ENCODE measurements at regions of chr9 and their contacts with region 1.

Region 1: DNA sequence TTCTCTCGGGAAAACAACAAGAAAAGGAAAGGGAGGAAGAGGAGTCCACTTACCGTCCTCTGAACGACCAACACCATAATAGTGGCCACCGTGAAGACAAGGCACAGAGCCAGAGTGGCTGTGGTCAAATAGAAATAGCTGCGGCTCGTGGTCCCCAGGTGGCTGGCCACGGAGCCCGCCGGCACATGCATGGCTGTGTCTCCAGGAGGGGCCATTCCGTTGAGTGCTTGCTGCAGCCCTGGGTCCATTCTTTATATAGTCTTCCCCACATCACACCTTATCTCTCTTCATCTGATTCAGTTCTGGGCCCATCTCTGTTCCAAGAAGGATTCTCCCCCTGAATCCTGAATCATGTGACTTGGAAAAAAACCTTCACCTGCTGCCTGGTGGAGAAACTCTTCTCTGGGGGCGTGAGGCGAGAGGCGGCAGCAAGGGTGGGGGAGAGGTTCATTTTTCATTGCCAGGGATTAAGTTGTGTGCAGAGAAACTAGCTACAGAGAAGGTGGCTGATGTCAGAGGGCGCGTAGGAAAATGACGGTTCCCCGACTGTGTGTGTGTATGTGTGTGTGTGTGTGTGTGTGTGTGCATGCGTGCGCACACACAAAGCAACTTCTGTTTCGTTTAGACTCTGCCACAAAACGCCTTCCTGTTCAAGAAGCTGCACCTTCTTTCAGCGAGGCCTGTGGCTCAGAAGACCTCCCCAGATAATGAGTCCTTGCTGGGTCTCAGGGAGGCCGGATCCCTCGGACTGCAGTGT is at the start of gene TNFSF8:
- DNase-seq: peak; percentile 83
- H3K4me3 Mint-ChIP-seq: peak within 1 kb of the TSS; percentile 94
- H3K27ac Mint-ChIP-seq: peak within 1 kb of the TSS; percentile 96
- H3K4me1 Mint-ChIP-seq: peaks cover 53% of the 10 kb centered on the region
- H3K27me3 Mint-ChIP-seq: peaks cover 2% of the 10 kb centered on the region
- total RNA-seq, gene TNFSF8: 34.6 to 34.8 TPM

Region 2: DNA sequence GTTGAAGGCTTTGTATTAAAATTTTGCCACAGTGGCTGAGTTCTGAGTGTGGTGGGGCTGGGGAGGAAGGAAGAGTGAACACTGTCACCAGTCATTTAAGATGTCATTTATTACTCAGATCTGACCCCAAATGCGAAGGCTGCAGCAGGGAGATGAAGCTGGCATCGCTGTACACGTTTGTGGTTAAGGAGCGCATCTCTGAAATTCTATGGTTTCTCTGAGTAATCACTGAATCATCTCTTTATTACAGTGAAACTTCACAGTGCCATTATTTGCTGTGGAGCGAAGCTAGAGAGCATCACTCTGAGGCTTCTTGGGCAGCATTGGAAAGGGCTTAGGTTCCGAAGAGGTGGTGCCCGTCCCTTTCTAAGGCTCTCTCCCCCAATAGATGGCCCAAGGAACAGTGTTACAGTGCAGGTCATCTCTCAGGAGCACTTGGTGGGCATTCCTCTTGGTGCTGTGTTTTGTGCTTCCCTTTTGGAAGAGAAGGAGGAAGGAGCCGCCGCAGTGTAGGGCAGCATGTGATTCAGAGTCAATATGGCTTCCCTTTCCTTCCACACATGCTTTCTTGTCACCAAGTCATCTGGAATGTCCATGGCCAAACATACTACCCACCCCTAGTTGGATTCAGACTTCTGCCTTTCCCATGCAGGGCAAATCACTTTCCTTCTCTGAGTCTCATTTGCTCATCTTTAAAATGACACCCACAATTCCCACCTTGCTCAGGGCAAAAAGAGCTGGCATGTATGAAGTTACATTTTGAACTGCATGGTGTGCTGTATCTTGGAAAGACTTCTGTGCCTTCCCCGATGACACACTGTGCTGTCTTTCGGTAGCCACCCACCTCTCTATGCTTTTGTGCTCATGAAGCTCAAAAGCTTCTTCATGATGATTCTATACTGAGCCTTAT is 238.9 kb before region 1 on chr9:
- CTCF ChIA-PET with region 1: interaction called, 6 read pairs
- POLR2A ChIA-PET with region 1: interaction called, 106 read pairs
- DNase-seq: peak; percentile 87
- H3K4me3 Mint-ChIP-seq: peak overlapping the region; percentile 26
- H3K27ac Mint-ChIP-seq: peak overlapping the region; percentile 93
- H3K4me1 Mint-ChIP-seq: peaks cover 95% of the 10 kb centered on the region
- H3K27me3 Mint-ChIP-seq: peaks cover 33% of the 10 kb centered on the region

Region 3: GRCh38 chr9:114738581-114739316 is 191.5 kb before region 1 on chr9:
- CTCF ChIA-PET with region 1: interaction called, 11 read pairs
- POLR2A ChIA-PET with region 1: interaction called, 28 read pairs
- DNase-seq: peak; percentile 80
- H3K4me3 Mint-ChIP-seq: no peak overlapping the region
- H3K27ac Mint-ChIP-seq: peak overlapping the region; percentile 64
- H3K4me1 Mint-ChIP-seq: peaks cover 59% of the 10 kb centered on the region
- H3K27me3 Mint-ChIP-seq: peaks cover 11% of the 10 kb centered on the region

Region 4: GRCh38 chr9:114880291-114880751 is 49.9 kb before region 1 on chr9:
- CTCF ChIA-PET with region 1: no interaction called
- POLR2A ChIA-PET with region 1: no interaction called
- DNase-seq: no peak
- H3K4me3 Mint-ChIP-seq: no peak overlapping the region
- H3K27ac Mint-ChIP-seq: no peak overlapping the region
- H3K4me1 Mint-ChIP-seq: peaks cover 2% of the 10 kb centered on the region
- H3K27me3 Mint-ChIP-seq: peaks cover 2% of the 10 kb centered on the region

Region 5: DNA sequence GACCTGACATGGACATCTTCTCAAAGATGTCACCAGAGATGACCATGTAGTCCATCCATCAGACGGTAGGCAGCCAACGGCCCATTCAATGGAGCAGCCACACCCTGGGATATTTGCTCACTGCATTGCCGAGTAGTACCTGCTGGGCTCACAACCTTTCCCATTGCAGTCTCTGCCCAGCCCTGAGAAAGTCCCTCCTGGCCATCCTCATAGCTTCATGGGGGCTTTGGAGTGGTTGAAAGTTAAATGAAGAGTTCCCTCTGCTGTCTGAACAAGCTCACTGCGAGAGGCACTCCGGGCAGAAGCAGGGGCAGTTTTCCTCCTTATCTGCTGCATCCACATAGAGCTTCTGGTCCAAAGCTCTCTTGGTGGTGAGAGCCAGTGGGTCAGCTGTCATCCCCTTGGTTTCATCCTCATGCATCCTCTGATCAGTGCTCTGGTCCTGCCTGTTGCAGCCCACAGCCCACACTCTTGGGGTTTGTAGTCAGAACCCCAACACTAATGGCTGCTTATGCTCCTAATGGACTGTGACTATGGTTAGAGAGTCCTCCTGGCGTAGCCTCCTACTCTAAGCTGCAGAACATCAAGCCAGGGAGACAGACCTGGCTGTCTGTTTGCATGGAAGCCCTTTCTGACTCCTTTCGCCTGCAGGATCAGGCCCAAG is 23.2 kb before region 1 on chr9:
- CTCF ChIA-PET with region 1: interaction called, 38 read pairs
- POLR2A ChIA-PET with region 1: interaction called, 373 read pairs
- DNase-seq: peak; percentile 38
- H3K4me3 Mint-ChIP-seq: peak overlapping the region; percentile 59
- H3K27ac Mint-ChIP-seq: peak overlapping the region; percentile 92
- H3K4me1 Mint-ChIP-seq: peaks cover 68% of the 10 kb centered on the region
- H3K27me3 Mint-ChIP-seq: no peaks in the 10 kb centered on the region

Region 6: DNA sequence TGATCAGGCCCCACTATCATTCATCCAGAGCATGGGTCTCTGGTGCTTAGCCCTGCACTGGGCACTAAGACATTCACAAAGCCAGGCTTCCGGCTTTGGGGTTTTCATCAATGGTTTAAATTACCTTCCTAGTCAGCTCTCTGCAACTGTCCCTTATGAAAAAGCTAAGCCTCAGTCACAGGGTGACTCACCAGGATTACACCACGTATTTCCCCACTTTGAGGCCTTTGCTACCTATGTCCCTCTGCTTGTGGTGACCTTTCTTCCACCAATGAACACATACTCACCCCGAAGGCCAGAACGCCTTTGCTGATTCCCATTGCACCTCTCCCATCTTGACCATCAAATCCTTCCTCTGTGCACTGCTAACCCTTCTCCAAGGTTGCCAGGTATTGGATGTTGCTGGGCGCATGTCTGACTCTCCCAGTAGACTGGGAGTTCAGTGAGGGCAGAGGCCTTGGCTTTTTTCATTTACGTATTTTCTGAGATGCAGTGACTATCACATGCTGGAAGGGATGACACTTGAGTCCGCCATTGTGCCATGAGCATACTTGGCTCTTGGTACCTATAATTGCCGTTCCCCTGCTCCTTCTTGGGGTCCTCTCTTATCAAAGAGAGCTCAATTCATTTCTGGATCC is 58.8 kb after region 1 on chr9:
- CTCF ChIA-PET with region 1: interaction called, 3 read pairs
- POLR2A ChIA-PET with region 1: interaction called, 24 read pairs
- DNase-seq: peak; percentile 20
- H3K4me3 Mint-ChIP-seq: no peak overlapping the region
- H3K27ac Mint-ChIP-seq: peak overlapping the region; percentile 63
- H3K4me1 Mint-ChIP-seq: peaks cover 34% of the 10 kb centered on the region
- H3K27me3 Mint-ChIP-seq: no peaks in the 10 kb centered on the region

Measured in activated CD4-positive, alpha-beta memory T cell treated with anti-CD3 and anti-CD28 coated beads, Interleukin-2, amount 10 ng/mL, durations not matched to agents 7 days and 5 days (primary cell).